ENCODE measurements at regions of chr9 and their contacts with region 1.

Region 1: GRCh38 chr9:73104342-73104741 is 47.3 kb upstream of the ANXA1 start:
- DNase-seq: no peak
- H3K27ac ChIP-seq: no peak overlapping the region
- CTCF ChIP-seq: no peak

Region 2: DNA sequence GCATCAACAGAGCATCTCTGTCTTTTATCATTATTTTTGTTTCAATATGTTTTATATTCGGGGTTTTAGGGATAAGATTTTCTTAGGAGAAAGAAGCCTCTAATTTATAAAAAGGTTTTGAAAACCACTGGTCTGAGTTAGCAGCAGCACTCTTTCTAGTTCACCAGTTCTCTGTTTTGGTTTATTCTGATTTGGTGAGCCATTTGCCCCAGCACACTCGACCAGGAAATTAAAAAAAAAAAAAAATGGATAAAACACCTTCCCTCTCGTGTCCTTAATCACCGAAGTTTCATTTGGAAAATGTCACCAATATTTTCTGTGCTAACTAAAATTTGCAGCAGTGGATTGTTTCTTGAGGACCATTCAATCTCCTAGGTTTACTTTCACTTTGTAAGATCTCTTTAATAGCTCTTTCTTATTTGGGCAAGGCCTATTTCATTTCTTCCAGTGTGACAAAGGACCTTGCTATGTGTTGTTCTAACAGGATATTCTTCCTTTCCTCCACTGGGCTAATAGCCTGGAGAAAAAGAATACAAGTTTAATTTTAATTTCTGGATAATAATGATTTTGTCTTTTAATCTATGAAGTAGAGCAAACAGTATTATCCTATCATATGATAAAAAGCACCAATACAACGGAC is 10.5 kb before region 1 on chr9:
- CTCF ChIA-PET with region 1: interaction called, 18 read pairs
- POLR2A ChIA-PET with region 1: no interaction called
- DNase-seq: no peak
- H3K27ac ChIP-seq: no peak overlapping the region
- CTCF ChIP-seq: no peak

Region 3: DNA sequence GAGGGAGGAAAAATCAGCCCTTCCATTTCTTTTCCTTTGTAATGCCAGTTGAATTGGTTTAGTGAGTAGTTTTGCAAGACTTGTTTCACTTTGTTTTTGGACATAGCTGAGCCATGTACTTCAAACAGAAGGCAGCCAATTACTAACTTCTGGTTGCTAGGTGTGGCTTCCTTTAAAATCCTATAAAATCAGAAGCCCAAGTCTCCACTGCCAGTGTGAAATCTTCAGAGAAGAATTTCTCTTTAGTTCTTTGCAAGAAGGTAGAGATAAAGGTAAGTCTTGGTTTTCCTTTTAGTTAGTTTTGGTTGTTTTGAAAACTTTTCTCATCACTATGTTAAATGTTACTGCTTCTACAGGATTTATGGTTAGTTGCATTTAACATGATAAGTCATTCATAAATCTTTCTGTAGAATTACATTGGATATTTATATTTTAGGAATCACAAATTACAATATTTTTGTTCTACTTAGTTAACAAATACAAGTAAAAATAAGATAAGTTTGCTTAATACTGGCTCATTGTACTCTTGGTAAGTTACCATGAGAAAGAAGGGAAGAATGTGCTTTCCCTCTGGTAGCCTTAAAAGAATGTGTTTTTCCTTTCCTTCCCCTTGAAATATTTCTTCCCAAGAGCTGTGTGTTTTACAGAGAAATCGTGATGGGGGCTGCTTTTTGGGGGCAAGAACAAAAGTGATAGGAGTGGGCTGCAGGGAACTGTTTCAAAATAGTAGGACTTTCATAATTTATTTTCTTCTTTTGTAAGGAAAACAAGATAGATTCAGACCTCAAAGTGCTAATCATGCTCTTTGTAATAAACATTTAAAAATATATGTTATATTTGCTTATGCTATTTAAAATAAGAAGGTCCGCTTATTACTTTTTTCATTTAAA is 47.6 kb after region 1 on chr9 and contains the start of gene ANXA1:
- CTCF ChIA-PET with region 1: interaction called, 11 read pairs
- POLR2A ChIA-PET with region 1: no interaction called
- DNase-seq: peak; percentile 90
- H3K27ac ChIP-seq: no peak within 1 kb of the TSS
- CTCF ChIP-seq: no peak

Region 4: DNA sequence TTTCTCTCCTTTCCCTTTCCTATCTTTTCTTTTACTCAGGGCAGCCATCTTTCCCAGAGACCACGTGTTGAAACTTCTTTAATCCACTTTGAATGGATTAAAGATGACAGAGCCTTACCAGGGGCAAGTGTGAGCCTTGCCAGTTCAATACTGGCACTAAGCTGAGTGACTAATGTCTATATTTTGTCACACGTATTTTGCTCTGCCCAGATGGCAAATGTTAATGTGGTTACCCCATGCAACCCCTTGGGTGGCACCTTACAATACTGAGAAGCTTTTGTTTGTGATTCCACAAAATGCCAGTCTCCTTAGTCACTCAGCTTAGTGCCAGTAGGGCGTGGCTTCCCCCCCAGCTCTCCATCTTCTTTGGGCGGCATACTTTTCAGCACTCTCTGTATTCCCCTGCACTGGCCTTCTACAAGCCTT is 72.1 kb after region 1 on chr9:
- CTCF ChIA-PET with region 1: interaction called, 23 read pairs
- POLR2A ChIA-PET with region 1: no interaction called
- DNase-seq: peak; percentile 66
- H3K27ac ChIP-seq: peak overlapping the region; percentile 42; the same call in 1 of the 2 replicates
- CTCF ChIP-seq: no peak

Region 5: GRCh38 chr9:73183917-73184861 is 79.8 kb after region 1 on chr9:
- CTCF ChIA-PET with region 1: interaction called, 15 read pairs
- POLR2A ChIA-PET with region 1: no interaction called
- DNase-seq: peak; percentile 30
- H3K27ac ChIP-seq: no peak overlapping the region
- CTCF ChIP-seq: no peak; the same call in 1 of the 2 replicates

Measured in RWPE1 (cell line).